Natural killer cell (primary cell): ENCODE measurements at regions of chr19 and their contacts with region 1.

Region 1: GRCh38 chr19:46392243-46392801 is 21.0 kb downstream of the CCDC8 start:
- DNase-seq: no peak
- ATAC-seq: no peak
- H3K4me3 ChIP-seq: no peak overlapping the region
- H3K4me3 Mint-ChIP-seq: no peak overlapping the region
- H3K27ac ChIP-seq: no peak overlapping the region
- H3K27ac Mint-ChIP-seq: peak overlapping the region; percentile 6 to 34
- H3K4me1 ChIP-seq: peaks cover 4% of the 10 kb centered on the region
- H3K4me1 Mint-ChIP-seq: peaks cover 5 to 6% of the 10 kb centered on the region in 2 donors
- H3K27me3 ChIP-seq: no peaks in the 10 kb centered on the region
- H3K27me3 Mint-ChIP-seq: no peaks in the 10 kb centered on the region
- CTCF ChIP-seq: no peak

Region 2: DNA sequence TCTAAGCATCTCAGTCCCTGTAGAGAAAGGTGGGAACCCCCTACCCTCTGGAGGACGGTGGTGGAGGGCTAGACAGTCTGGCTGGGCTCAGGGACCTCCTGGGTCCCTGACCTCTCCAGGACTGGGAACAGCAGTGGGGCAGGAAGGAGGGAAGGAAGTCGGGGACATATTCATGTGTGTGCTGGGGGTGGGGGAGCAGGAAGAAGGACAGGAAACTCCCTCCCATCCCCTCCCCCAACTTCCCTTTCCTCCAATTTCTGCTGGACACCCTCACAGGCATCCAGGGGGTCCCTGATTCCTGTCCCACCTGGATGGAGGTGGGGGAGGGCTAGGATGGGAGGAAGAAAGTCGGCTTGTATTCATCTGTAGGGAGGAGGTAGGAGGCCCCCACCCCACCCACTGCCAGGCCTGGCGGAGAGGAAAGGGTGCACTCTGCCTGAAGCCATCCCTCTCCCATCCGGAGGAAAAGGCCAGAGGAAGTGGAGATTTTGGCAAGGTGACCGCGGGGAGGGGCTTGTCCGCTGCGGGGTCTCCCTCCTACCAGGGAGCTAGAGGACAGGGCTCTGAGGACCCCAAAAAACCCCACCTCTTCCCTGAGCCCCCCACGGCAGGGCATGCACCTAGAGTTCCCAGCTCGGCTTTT is 420.9 kb before region 1 on chr19:
- intact Hi-C with region 1: no loop called
- DNase-seq: no peak
- ATAC-seq: no peak
- H3K4me3 ChIP-seq: no peak overlapping the region
- H3K4me3 Mint-ChIP-seq: no peak overlapping the region
- H3K27ac ChIP-seq: no peak overlapping the region
- H3K27ac Mint-ChIP-seq: peak overlapping the region in 1 of 2 donors; percentile 31
- H3K4me1 ChIP-seq: peaks cover 25% of the 10 kb centered on the region
- H3K4me1 Mint-ChIP-seq: peaks cover 8 to 17% of the 10 kb centered on the region in 2 donors
- H3K27me3 ChIP-seq: peaks cover 42% of the 10 kb centered on the region
- H3K27me3 Mint-ChIP-seq: peaks cover 55 to 64% of the 10 kb centered on the region in 2 donors
- CTCF ChIP-seq: no peak

Region 3: GRCh38 chr19:46107371-46107770 is 285.0 kb before region 1 on chr19:
- intact Hi-C with region 1: no loop called
- DNase-seq: no peak
- ATAC-seq: no peak
- H3K4me3 ChIP-seq: no peak overlapping the region
- H3K4me3 Mint-ChIP-seq: no peak overlapping the region
- H3K27ac ChIP-seq: no peak overlapping the region
- H3K27ac Mint-ChIP-seq: no peak overlapping the region
- H3K4me1 ChIP-seq: no peaks in the 10 kb centered on the region
- H3K4me1 Mint-ChIP-seq: no peaks in the 10 kb centered on the region
- H3K27me3 ChIP-seq: no peaks in the 10 kb centered on the region
- H3K27me3 Mint-ChIP-seq: peaks cover 3 to 4% of the 10 kb centered on the region in 2 donors
- CTCF ChIP-seq: no peak

Region 4: DNA sequence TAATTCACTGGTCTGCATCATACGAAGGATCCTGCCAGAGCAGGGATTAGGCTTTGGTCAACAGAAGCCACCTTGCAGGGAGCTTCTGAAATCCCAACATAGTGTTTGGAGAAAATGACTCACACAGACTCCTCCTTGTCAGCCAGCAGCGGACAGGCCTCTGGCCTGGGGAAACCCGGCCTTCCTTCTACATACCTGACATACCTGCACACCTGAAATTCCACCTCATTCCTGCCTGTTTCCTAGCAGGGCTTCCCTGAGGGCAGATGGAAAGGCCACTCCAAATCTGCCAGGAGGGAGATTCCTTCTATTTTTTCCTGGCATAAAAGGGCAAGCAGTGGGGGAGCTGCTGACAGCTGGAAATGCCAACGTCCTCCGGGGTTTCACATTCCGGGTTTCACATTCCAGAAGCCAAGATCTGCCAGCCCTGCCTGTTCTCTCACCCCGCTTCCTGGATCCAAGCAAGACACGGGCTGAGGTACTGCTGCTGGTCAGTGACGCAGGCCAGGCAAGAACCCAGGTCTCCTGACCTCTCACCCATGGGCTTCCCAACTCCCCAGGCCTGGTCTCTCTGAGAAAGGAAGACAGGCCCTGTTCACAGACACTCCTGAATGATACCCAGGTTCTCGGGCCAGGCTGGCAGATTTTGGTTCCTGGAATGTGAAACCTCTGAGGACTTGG is 181.0 kb before region 1 on chr19:
- intact Hi-C with region 1: no loop called
- DNase-seq: no peak
- ATAC-seq: no peak
- H3K4me3 ChIP-seq: no peak overlapping the region
- H3K4me3 Mint-ChIP-seq: no peak overlapping the region
- H3K27ac ChIP-seq: no peak overlapping the region
- H3K27ac Mint-ChIP-seq: no peak overlapping the region
- H3K4me1 ChIP-seq: no peaks in the 10 kb centered on the region
- H3K4me1 Mint-ChIP-seq: peaks cover 0 to 14% of the 10 kb centered on the region in 2 donors
- H3K27me3 ChIP-seq: peaks cover 4% of the 10 kb centered on the region
- H3K27me3 Mint-ChIP-seq: peaks cover 39 to 50% of the 10 kb centered on the region in 2 donors
- CTCF ChIP-seq: no peak

Region 5: GRCh38 chr19:46283771-46284170 is 108.6 kb before region 1 on chr19:
- intact Hi-C with region 1: loop called (anchors 1 kb)
- DNase-seq: no peak
- ATAC-seq: no peak
- H3K4me3 ChIP-seq: no peak overlapping the region
- H3K4me3 Mint-ChIP-seq: no peak overlapping the region
- H3K27ac ChIP-seq: no peak overlapping the region
- H3K27ac Mint-ChIP-seq: no peak overlapping the region
- H3K4me1 ChIP-seq: no peaks in the 10 kb centered on the region
- H3K4me1 Mint-ChIP-seq: no peaks in the 10 kb centered on the region
- H3K27me3 ChIP-seq: no peaks in the 10 kb centered on the region
- H3K27me3 Mint-ChIP-seq: peaks cover 4 to 6% of the 10 kb centered on the region in 2 donors
- CTCF ChIP-seq: no peak

Region 6: GRCh38 chr19:46542428-46543230 is 150.3 kb after region 1 on chr19:
- intact Hi-C with region 1: loop called (anchors 2 kb)
- DNase-seq: peak; percentile 73 to 88
- ATAC-seq: peak; percentile 72 to 79 (median 74)
- H3K4me3 ChIP-seq: no peak overlapping the region
- H3K4me3 Mint-ChIP-seq: no peak overlapping the region
- H3K27ac ChIP-seq: no peak overlapping the region
- H3K27ac Mint-ChIP-seq: no peak overlapping the region
- H3K4me1 ChIP-seq: no peaks in the 10 kb centered on the region
- H3K4me1 Mint-ChIP-seq: peaks cover 1 to 9% of the 10 kb centered on the region in 2 donors
- H3K27me3 ChIP-seq: no peaks in the 10 kb centered on the region
- H3K27me3 Mint-ChIP-seq: peaks cover 5 to 12% of the 10 kb centered on the region in 2 donors
- CTCF ChIP-seq: peak; percentile 99

Region 7: GRCh38 chr19:46813839-46814363 is 421.6 kb after region 1 on chr19:
- intact Hi-C with region 1: no loop called
- DNase-seq: no peak
- ATAC-seq: no peak
- H3K4me3 ChIP-seq: no peak overlapping the region
- H3K4me3 Mint-ChIP-seq: no peak overlapping the region
- H3K27ac ChIP-seq: no peak overlapping the region
- H3K27ac Mint-ChIP-seq: no peak overlapping the region
- H3K4me1 ChIP-seq: no peaks in the 10 kb centered on the region
- H3K4me1 Mint-ChIP-seq: no peaks in the 10 kb centered on the region
- H3K27me3 ChIP-seq: no peaks in the 10 kb centered on the region
- H3K27me3 Mint-ChIP-seq: peaks cover 0 to 10% of the 10 kb centered on the region in 2 donors
- CTCF ChIP-seq: no peak